ENCODE measurements at regions of chr20 and their contacts with region 1.

Region 1: DNA sequence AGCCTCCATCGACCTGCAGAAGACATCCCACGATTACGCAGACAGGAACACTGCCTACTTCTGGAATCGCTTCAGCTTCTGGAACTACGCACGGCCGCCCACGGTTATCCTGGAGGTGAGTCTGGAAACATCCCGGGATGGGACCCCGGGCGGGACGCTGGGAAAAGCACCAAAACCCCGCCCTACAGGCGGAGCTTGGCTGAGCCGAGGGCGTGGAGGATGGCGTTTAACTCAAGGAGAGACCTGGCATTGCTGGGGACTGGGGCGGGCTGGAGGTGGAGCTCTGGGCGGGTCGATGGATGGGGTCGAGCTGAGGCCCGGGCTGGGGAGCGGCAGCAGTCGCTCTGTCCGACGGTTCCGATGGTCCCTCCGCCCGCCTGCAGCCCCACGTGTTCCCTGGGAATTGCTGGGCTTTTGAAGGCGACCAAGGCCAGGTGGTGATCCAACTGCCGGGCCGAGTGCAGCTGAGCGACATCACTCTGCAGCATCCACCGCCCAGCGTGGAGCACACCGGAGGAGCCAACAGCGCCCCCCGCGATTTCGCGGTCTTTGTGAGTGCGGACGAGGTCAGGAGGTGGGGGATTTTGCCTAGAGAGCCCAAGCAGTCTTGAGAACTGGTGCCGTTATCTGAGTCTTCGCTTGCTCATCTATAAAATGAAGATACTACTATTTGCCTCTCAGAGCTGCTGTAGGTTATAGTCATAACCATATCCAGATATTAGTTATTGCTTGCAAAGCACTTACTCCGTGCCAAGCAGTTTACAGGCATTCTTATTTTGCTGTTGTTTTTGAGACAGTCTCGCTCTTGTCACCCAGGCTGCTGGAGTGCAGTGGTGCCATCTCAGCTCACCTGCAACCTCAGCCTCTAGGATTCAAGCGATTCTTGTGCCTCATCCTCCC is 3.8 kb downstream of the SPAG4 start:
- DNase-seq: peak; percentile 98
- H3K27ac ChIP-seq: peak overlapping the region; percentile 88
- CTCF ChIP-seq: peak; percentile 87

Region 2: DNA sequence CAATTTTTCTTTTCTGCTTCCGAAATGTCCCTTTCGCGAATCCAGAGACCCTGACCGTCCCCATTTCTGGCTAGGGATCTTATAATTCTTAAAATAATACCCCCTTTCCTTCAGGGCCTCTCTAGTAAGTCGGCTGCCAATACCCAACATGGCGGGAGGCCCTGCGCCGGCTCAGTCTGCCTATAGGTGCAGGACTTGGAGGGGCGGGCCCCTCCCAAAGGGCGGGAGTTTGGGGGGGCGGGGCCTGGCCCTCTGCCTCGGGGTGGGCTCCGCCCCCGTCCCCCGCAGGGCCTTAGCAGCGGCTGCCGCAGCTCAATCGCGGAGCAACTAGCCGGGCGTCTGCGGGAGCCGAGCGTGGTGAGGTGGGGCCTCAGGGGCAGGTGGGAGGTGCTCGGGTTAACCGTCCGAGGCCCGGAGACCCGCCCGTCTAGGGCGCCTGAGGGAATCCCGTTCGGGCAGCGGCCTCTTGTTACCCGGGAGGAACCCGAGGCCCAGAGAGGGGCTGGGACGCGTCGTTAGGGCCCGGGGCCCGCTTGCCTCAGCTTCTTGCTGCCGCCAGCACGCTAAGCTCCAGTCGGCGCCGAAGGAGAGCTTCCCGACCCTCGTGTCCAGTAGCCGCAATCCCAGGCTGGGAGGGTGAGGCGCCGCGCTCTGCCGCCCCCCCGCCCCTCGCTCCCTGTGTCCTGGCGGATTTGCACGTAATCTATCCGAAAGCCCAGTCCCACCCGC is 164.4 kb before region 1 on chr20 and contains the start of gene CEP250:
- CTCF ChIA-PET with region 1: no interaction called
- POLR2A ChIA-PET with region 1: interaction called, 11 read pairs
- DNase-seq: peak; percentile 99
- H3K27ac ChIP-seq: peak within 1 kb of the TSS; percentile 95
- CTCF ChIP-seq: no peak

Region 3: DNA sequence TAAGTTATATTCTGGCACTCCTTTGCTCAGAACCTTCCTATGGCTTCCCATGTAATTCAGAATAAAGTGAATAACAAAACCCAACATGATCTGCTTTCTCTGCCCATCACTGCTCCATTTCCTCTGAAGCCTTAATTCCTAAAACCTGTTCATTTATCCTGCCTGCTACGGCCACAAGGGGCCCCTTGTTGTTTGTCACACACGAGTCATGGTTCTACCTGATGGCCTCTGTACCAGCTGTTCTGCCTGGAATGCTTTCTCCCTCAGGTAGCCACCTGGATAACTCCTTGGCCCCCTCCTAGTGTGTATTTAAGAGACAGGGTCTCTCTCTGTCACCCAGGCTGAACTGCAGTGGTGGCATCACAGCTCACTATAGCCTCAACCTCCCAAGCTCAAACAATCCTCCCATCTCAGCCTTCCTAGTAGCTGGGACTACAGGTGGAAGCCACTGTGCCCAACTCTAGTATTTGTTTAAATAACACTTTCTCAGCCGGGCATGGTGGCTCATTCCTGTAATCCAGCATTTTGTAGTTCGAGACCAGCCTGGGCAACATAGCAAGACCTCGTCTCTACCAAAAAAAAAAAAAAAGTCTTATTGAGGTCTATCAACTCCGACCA is 50.7 kb before region 1 on chr20:
- CTCF ChIA-PET with region 1: no interaction called
- POLR2A ChIA-PET with region 1: no interaction called
- DNase-seq: peak; percentile 64
- H3K27ac ChIP-seq: no peak overlapping the region
- CTCF ChIP-seq: 0 out of 2 replicates have a peak, but pooled peaks have one; percentile 14

Region 4: GRCh38 chr20:35630636-35631035 is 11.2 kb after region 1 on chr20:
- CTCF ChIA-PET with region 1: interaction called, 13 read pairs
- POLR2A ChIA-PET with region 1: no interaction called
- DNase-seq: no peak
- H3K27ac ChIP-seq: peak overlapping the region; percentile 27
- CTCF ChIP-seq: no peak

Measured in RWPE1 (cell line).